Lower leg skin (tissue), 4 donors: ENCODE measurements at regions of chr6 and their contacts with region 1.

Region 1: GRCh38 chr6:62390401-62390800 is 104.4 kb upstream of the KHDRBS2 start:
- DNase-seq: no peak
- H3K4me3 ChIP-seq: no peak overlapping the region
- CTCF ChIP-seq: no peak
- POLR2A ChIP-seq: no peak

Region 2: DNA sequence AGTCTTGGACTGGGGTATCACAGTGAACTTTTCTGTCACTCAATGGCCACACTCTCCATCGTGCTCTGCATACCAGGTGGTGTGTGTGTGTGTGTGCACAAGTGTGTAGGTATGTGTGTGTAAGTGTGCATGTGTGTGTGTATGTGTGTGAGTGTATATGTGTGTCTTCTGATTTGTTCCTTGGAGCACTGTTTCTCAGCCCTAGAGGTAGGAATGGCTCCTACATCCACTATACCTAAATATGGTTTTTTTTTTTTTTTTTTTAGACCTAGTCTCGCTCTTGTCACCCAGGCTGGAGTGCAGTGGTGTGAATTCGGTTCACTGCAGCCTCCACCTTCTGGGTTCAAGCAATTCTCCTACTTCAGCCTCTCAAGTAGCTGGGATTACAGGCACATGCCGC is 1481.8 kb after region 1 on chr6:
- intact Hi-C with region 1: loop called (anchors 10 kb)
- DNase-seq: no peak
- H3K4me3 ChIP-seq: no peak overlapping the region
- CTCF ChIP-seq: no peak
- POLR2A ChIP-seq: no peak